ENCODE measurements at regions of chr12 and their contacts with region 1.

Region 1: DNA sequence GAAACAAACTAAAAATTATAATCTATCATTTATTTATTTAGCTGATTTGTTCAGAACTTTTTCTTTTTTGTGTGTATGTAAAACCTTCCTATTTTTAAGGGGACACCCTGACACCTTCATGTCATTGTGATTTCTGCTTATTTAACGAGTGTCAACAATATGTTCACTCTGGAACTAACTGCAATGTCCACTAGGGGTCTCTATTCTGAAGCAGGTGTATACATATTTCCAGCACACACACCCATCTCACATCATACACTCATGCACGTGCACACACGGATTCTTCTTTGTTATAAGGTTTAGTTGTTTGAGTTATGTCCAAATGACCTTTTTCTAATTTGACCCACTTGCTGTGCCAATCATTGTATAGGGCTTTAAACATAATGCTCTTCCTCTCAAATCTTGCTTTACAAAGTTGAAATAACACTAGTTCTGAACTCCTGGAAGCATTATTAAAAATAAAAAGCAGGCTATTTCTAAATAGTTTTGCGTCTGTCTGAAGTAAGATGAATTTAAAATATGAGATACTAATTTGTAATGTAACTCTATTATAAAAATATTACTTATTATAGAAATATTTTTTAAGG is 15.5 kb downstream of the E2F7 start:
- DNase-seq: peak; percentile 49
- H3K4me3 ChIP-seq: no peak overlapping the region
- H3K27ac ChIP-seq: no peak overlapping the region
- H3K4me1 ChIP-seq: peaks cover 0 to 18% of the 10 kb centered on the region in 2 experiments; a peak in 3 of 4 replicates
- H3K27me3 ChIP-seq: no peaks in the 10 kb centered on the region
- CTCF ChIP-seq: peak; percentile 89
- EP300 ChIP-seq: no peak
- RAD21 ChIP-seq: peak; percentile 76

Region 2: GRCh38 chr12:77031745-77032144 is 18.1 kb before region 1 on chr12:
- CTCF ChIA-PET with region 1: interaction called, 20 read pairs
- POLR2A ChIA-PET with region 1: no interaction called
- DNase-seq: peak; percentile 12
- H3K4me3 ChIP-seq: no peak overlapping the region
- H3K27ac ChIP-seq: peak overlapping the region; percentile 31 to 80; a peak in 2 of 4 replicates
- H3K4me1 ChIP-seq: peaks cover 9 to 15% of the 10 kb centered on the region in 2 experiments; a peak in 1 of 4 replicates
- H3K27me3 ChIP-seq: no peaks in the 10 kb centered on the region
- CTCF ChIP-seq: no peak
- EP300 ChIP-seq: no peak; a peak in 1 of 4 replicates
- RAD21 ChIP-seq: no peak

Region 3: GRCh38 chr12:77060136-77060882 is 10.4 kb after region 1 on chr12:
- CTCF ChIA-PET with region 1: interaction called, 27 read pairs
- POLR2A ChIA-PET with region 1: no interaction called
- DNase-seq: no peak
- H3K4me3 ChIP-seq: no peak overlapping the region
- H3K27ac ChIP-seq: peak overlapping the region in 1 of 2 experiments; percentile 79; a peak in 2 of 4 replicates
- H3K4me1 ChIP-seq: peaks cover 0 to 10% of the 10 kb centered on the region in 2 experiments
- H3K27me3 ChIP-seq: no peaks in the 10 kb centered on the region
- CTCF ChIP-seq: no peak
- EP300 ChIP-seq: no peak
- RAD21 ChIP-seq: no peak